ENCODE measurements at regions of chr19 and their contacts with region 1.

Region 1: DNA sequence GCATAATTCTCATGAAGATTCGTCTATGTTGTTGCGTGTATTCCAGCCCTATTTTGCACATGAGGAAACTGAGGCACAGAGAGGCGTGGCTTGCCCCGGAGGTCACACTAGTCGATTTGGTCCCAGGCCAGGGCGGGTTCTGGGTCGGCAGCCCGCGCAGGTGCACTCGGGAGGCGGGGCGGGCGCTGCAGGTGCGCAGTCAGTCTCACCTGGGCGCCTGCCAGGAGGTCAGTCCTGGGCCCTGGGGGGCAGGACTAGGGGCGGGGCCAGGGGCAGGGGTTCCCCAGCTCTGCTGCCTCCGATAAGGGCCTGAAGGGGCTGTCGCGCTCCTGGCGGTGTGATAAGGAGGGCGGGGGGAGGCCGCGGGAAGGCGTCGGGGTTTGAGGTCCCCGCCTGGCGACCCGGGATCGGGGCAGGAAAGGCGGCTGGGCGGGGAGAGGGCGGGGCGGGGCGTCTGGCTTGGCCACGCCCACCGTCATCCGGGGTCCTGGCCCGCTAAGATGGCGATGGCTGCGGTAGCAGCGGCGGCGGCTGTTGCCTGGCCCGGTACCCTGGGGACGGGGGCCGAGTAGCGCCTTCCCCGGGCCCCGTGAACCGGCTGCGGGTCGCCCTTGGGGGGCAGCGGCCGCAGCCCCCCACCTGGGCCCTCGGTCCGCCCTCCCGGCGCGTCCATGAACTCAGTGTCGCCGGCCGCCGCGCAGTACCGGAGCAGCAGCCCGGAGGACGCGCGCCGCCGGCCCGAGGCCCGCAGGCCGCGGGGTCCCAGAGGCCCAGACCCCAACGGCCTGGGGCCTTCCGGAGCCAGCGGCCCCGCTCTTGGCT is at the start of gene ATG4D:
- DNase-seq: peak; percentile 55 to 74 (median 66)
- H3K4me3 ChIP-seq: peak within 1 kb of the TSS; percentile 76 to 95 (median 80)
- H3K4me3 Mint-ChIP-seq: peak within 1 kb of the TSS; percentile 84 to 90
- H3K27ac ChIP-seq: peak within 1 kb of the TSS; percentile 28 to 83
- H3K27ac Mint-ChIP-seq: peak within 1 kb of the TSS in 6 of 7 donors; percentile 35 to 89 (median 76)
- H3K4me1 ChIP-seq: peaks cover 24 to 33% of the 10 kb centered on the region in 2 donors
- H3K4me1 Mint-ChIP-seq: peaks cover 27% of the 10 kb centered on the region
- H3K27me3 ChIP-seq: no peaks in the 10 kb centered on the region
- H3K27me3 Mint-ChIP-seq: peaks cover 2 to 6% (median 5%) of the 10 kb centered on the region in 3 donors
- CTCF ChIP-seq: no peak
- polyA plus RNA-seq, gene ATG4D: 10.7 to 52.8 (median 11.9) TPM

Region 2: GRCh38 chr19:10560154-10560553 is 16.5 kb after region 1 on chr19:
- intact Hi-C with region 1: loop called in 1 of 2 experiments (anchors 2 kb)
- DNase-seq: no peak
- H3K4me3 ChIP-seq: no peak overlapping the region
- H3K4me3 Mint-ChIP-seq: no peak overlapping the region
- H3K27ac ChIP-seq: no peak overlapping the region
- H3K27ac Mint-ChIP-seq: no peak overlapping the region
- H3K4me1 ChIP-seq: peaks cover 9 to 12% of the 10 kb centered on the region in 2 donors
- H3K4me1 Mint-ChIP-seq: peaks cover 16% of the 10 kb centered on the region
- H3K27me3 ChIP-seq: no peaks in the 10 kb centered on the region
- H3K27me3 Mint-ChIP-seq: no peaks in the 10 kb centered on the region
- CTCF ChIP-seq: no peak

Region 3: GRCh38 chr19:10593820-10594637 is 50.4 kb after region 1 on chr19:
- intact Hi-C with region 1: no loop called
- DNase-seq: peak; percentile 31 to 56 (median 44)
- H3K4me3 ChIP-seq: no peak overlapping the region
- H3K4me3 Mint-ChIP-seq: peak overlapping the region; percentile 12 to 37
- H3K27ac ChIP-seq: peak overlapping the region; percentile 64 to 75
- H3K27ac Mint-ChIP-seq: peak overlapping the region; percentile 66 to 94 (median 84)
- H3K4me1 ChIP-seq: peaks cover 64 to 72% of the 10 kb centered on the region in 2 donors
- H3K4me1 Mint-ChIP-seq: peaks cover 65% of the 10 kb centered on the region
- H3K27me3 ChIP-seq: no peaks in the 10 kb centered on the region
- H3K27me3 Mint-ChIP-seq: peaks cover 0 to 3% (median 1%) of the 10 kb centered on the region in 3 donors
- CTCF ChIP-seq: no peak